ENCODE measurements at regions of chr7 and their contacts with region 1.

Region 1: DNA sequence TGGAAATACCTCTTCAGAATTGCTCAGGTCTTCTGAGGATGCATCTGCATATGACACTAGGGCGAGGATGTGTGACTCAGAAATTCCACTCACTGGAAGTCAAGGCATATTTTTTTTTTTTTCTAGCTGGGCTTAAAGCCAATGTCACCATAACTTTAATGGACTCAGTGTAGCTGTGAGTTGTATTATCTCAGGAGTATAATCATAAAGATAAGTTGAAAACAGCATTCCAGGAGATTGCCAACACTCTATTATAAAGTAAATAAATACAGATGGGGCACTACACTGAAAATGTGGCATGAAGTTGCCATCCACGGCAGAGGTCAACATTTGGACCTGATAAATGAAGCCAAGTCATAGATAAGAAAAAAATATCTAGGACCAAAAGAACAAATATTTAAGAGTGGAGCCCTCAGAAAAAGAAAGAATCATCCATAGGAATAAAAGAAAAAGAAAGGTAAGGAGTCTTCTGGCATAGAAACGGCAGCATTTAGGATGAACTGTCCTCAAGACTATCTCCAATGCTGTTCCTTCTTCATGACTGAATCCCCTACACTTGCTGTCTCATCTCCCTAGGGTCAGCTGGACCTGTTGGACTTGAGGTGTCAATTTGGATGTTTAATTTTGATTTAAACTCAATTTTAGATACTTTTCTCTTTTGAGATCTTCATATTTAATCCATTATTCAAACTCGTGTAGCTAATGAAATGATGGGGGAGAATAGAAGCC is 72.9 kb upstream of the CAV2 start:
- DNase-seq: peak; percentile 98
- H3K4me3 ChIP-seq: no peak overlapping the region
- H3K27ac ChIP-seq: peak overlapping the region; percentile 91
- H3K4me1 ChIP-seq: peaks cover 26% of the 10 kb centered on the region
- H3K27me3 ChIP-seq: no peaks in the 10 kb centered on the region
- CTCF ChIP-seq: no peak
- POLR2A ChIP-seq: peak; percentile 65

Region 2: GRCh38 chr7:116271963-116272839 is 154.4 kb before region 1 on chr7:
- CTCF ChIA-PET with region 1: interaction called, 4 read pairs
- POLR2A ChIA-PET with region 1: no interaction called
- dilution Hi-C with region 1: no loop called
- intact Hi-C with region 1: loop called (anchors 1 kb)
- DNase-seq: peak; percentile 94
- H3K4me3 ChIP-seq: peak overlapping the region in 1 of 3 experiments; percentile 48
- H3K27ac ChIP-seq: peak overlapping the region; percentile 90
- H3K4me1 ChIP-seq: peaks cover 57% of the 10 kb centered on the region
- H3K27me3 ChIP-seq: no peaks in the 10 kb centered on the region
- CTCF ChIP-seq: no peak
- POLR2A ChIP-seq: no peak

Region 3: DNA sequence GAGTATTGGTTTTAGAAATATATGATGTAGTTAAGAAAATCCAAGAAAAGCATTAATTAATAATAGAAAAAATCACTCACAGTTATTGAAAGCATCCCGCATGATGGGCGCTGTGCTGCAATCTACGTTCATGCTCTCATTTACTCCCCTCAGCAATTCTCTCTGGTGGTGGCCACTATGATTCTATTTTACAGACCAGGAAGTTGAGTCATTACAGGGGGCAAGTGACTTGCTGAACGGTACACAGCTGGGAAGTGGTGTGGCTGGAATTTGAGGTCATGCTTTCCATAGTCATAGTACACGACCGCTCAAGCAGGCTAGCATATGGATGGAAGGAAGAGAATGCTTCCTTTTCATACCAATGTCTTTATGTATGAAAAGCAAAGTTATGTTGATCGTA is 98.8 kb before region 1 on chr7:
- CTCF ChIA-PET with region 1: no interaction called
- POLR2A ChIA-PET with region 1: interaction called, 3 read pairs
- dilution Hi-C with region 1: no loop called
- intact Hi-C with region 1: loop called (anchors 1 kb)
- DNase-seq: peak; percentile 97
- H3K4me3 ChIP-seq: peak overlapping the region; percentile 43 to 99 (median 98)
- H3K27ac ChIP-seq: peak overlapping the region; percentile 97
- H3K4me1 ChIP-seq: peaks cover 48% of the 10 kb centered on the region
- H3K27me3 ChIP-seq: no peaks in the 10 kb centered on the region
- CTCF ChIP-seq: no peak
- POLR2A ChIP-seq: peak; percentile 97

Region 4: GRCh38 chr7:116395125-116395791 is 31.3 kb before region 1 on chr7:
- CTCF ChIA-PET with region 1: interaction called, 6 read pairs
- POLR2A ChIA-PET with region 1: no interaction called
- dilution Hi-C with region 1: no loop called
- intact Hi-C with region 1: loop called (anchors 1 kb)
- DNase-seq: peak; percentile 88
- H3K4me3 ChIP-seq: no peak overlapping the region
- H3K27ac ChIP-seq: peak overlapping the region; percentile 85
- H3K4me1 ChIP-seq: peaks cover 38% of the 10 kb centered on the region
- H3K27me3 ChIP-seq: no peaks in the 10 kb centered on the region
- CTCF ChIP-seq: no peak
- POLR2A ChIP-seq: no peak

Region 5: GRCh38 chr7:116461500-116461899 is 34.9 kb after region 1 on chr7:
- CTCF ChIA-PET with region 1: no interaction called
- POLR2A ChIA-PET with region 1: no interaction called
- dilution Hi-C with region 1: no loop called
- intact Hi-C with region 1: loop called (anchors 1 kb)
- DNase-seq: no peak
- H3K4me3 ChIP-seq: no peak overlapping the region
- H3K27ac ChIP-seq: no peak overlapping the region
- H3K4me1 ChIP-seq: peaks cover 15% of the 10 kb centered on the region
- H3K27me3 ChIP-seq: no peaks in the 10 kb centered on the region
- CTCF ChIP-seq: peak in 1 of 2 donors; percentile 11
- POLR2A ChIP-seq: no peak

Region 6: DNA sequence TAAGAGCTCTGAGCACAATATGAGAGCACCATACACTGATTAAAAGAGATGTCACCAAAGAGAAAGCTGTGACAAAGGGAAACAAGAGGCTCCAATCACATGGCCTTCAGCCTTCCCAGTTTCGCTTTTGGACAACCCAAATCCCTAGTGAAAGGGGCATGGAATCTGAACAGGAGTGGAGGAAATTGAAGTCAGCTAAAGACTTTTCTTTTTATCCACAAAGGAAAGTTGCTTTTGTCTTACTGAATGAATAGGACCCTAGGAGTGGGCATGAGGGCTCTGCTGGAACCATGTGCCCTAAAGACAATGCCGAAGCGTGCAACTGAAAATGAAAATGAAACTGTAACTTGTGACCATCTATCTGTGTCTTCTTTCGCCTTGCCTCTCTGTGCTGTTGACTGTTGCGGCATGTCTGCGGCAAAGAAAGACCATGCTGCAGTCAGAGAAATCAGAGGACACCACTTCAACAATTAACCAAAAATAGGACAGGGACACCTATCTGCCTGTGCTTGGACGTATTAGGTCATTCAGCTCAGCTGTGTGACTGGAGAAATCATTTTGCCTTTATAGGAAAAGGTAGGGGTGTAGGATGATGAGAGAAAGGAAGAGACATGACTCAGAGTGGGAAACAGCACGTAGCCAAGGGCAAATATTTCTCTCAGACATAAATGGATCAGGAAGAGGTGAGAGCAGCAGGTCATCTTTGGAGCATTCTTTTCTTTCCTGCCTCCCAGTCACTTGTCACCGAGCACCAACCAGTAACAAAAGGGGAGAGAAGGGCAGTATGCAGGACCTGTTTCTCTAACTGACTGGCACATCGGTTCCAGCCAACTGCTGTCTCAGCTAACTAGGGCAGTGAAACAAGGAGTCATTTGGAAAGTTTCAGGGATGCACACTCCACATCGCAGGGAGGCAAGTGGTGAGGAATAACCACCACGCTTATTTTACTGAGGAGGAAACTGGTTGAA is 85.2 kb after region 1 on chr7:
- CTCF ChIA-PET with region 1: no interaction called
- POLR2A ChIA-PET with region 1: no interaction called
- dilution Hi-C with region 1: no loop called
- intact Hi-C with region 1: loop called (anchors 1 kb)
- DNase-seq: peak; percentile 96
- H3K4me3 ChIP-seq: peak overlapping the region; percentile 32 to 70 (median 45)
- H3K27ac ChIP-seq: peak overlapping the region; percentile 96
- H3K4me1 ChIP-seq: peaks cover 54% of the 10 kb centered on the region
- H3K27me3 ChIP-seq: no peaks in the 10 kb centered on the region
- CTCF ChIP-seq: no peak
- POLR2A ChIP-seq: peak; percentile 76